CD4-positive, alpha-beta memory T cell (primary cell): ENCODE measurements at regions of chr5 and their contacts with region 1.

Region 1: DNA sequence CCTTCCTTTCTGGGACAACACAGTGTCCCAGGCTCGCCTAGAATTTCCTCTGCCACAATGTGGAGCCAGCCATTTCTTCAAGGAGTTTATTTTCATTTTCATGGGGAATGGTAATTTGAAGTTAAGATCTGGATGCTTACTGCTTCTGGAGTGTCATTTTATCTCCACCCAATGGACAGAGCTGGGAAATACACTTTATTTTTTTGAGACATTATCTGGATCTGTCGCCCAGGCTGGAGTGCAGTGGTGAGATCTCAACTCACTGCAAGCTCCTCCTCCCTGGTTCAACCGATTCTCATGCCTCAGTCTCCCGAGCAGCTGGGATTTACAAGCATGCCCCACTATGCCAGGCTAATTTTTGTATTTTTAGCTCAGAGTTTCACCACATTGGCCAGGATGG is 12.7 kb upstream of the THG1L start:
- DNase-seq: peak; percentile 37 to 61 (median 45)
- H3K4me3 ChIP-seq: no peak overlapping the region
- H3K4me3 Mint-ChIP-seq: peak overlapping the region in 6 of 8 donors; percentile 27 to 78 (median 54)
- H3K27ac ChIP-seq: no peak overlapping the region
- H3K27ac Mint-ChIP-seq: peak overlapping the region in 6 of 7 donors; percentile 23 to 72 (median 42)
- H3K4me1 ChIP-seq: peaks cover 21% of the 10 kb centered on the region
- H3K4me1 Mint-ChIP-seq: peaks cover 16 to 26% (median 20%) of the 10 kb centered on the region in 4 donors
- H3K27me3 ChIP-seq: no peaks in the 10 kb centered on the region
- H3K27me3 Mint-ChIP-seq: no peaks in the 10 kb centered on the region

Region 2: GRCh38 chr5:157328277-157328912 is 390.1 kb before region 1 on chr5:
- CTCF ChIA-PET with region 1: interaction called, 20 read pairs
- POLR2A ChIA-PET with region 1: no interaction called
- intact Hi-C with region 1: loop called (anchors 1 kb)
- DNase-seq: peak; percentile 66 to 69 (median 67)
- H3K4me3 ChIP-seq: no peak overlapping the region
- H3K4me3 Mint-ChIP-seq: peak overlapping the region; percentile 3 to 69 (median 58)
- H3K27ac ChIP-seq: peak overlapping the region; percentile 30
- H3K27ac Mint-ChIP-seq: peak overlapping the region; percentile 72 to 96 (median 89)
- H3K4me1 ChIP-seq: peaks cover 27% of the 10 kb centered on the region
- H3K4me1 Mint-ChIP-seq: peaks cover 23 to 44% (median 26%) of the 10 kb centered on the region in 4 donors
- H3K27me3 ChIP-seq: no peaks in the 10 kb centered on the region
- H3K27me3 Mint-ChIP-seq: no peaks in the 10 kb centered on the region

Region 3: DNA sequence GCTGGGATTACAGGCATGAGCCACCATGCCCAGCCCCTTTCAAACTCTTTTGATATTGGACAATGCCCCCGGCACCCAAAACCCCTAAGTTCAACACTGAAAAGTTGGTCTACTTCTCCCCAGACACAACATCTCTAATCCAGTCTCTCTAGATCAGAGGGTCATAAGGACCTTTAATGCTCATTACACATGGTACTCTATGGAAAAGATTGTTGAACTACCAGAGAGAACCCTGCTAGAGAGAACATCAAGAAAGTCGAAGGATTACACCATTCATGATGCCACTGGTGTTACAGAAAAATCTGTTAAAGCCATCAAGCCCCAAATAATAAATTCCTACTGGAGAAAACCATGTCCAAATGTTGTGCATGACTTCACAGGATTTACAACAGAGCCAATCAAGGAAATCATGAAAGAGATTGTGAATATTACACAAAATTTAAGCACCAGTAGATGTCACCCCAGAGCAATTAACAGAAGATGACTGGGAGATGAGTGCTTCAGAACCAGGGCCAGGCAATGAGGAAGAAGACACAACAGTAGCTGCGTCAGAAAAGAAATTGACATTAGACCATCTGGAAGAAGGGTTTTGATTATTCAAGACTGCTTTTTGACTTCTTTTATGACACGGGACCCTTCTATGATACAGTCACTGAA is 286.8 kb before region 1 on chr5:
- CTCF ChIA-PET with region 1: interaction called, 137 read pairs
- POLR2A ChIA-PET with region 1: interaction called, 4 read pairs
- intact Hi-C with region 1: loop called (anchors 1 kb)
- DNase-seq: peak; percentile 49 to 63 (median 59)
- H3K4me3 ChIP-seq: no peak overlapping the region
- H3K4me3 Mint-ChIP-seq: peak overlapping the region in 4 of 8 donors; percentile 17 to 65 (median 42)
- H3K27ac ChIP-seq: no peak overlapping the region
- H3K27ac Mint-ChIP-seq: peak overlapping the region in 6 of 7 donors; percentile 3 to 83 (median 77)
- H3K4me1 ChIP-seq: peaks cover 4% of the 10 kb centered on the region
- H3K4me1 Mint-ChIP-seq: peaks cover 5 to 7% (median 5%) of the 10 kb centered on the region in 4 donors
- H3K27me3 ChIP-seq: no peaks in the 10 kb centered on the region
- H3K27me3 Mint-ChIP-seq: no peaks in the 10 kb centered on the region

Region 4: GRCh38 chr5:157476702-157477408 is 241.7 kb before region 1 on chr5:
- CTCF ChIA-PET with region 1: interaction called, 27 read pairs
- POLR2A ChIA-PET with region 1: no interaction called
- intact Hi-C with region 1: loop called (anchors 2 kb)
- DNase-seq: peak in 4 of 5 donors; percentile 19 to 36 (median 28)
- H3K4me3 ChIP-seq: no peak overlapping the region
- H3K4me3 Mint-ChIP-seq: no peak overlapping the region
- H3K27ac ChIP-seq: no peak overlapping the region
- H3K27ac Mint-ChIP-seq: peak overlapping the region in 5 of 7 donors; percentile 20 to 70 (median 50)
- H3K4me1 ChIP-seq: peaks cover 35% of the 10 kb centered on the region
- H3K4me1 Mint-ChIP-seq: peaks cover 23 to 45% (median 29%) of the 10 kb centered on the region in 4 donors
- H3K27me3 ChIP-seq: no peaks in the 10 kb centered on the region
- H3K27me3 Mint-ChIP-seq: no peaks in the 10 kb centered on the region

Region 5: GRCh38 chr5:157582731-157583620 is 135.5 kb before region 1 on chr5:
- CTCF ChIA-PET with region 1: interaction called, 10 read pairs
- POLR2A ChIA-PET with region 1: interaction called, 4 read pairs
- intact Hi-C with region 1: no loop called
- DNase-seq: no peak
- H3K4me3 ChIP-seq: no peak overlapping the region
- H3K4me3 Mint-ChIP-seq: peak overlapping the region in 2 of 8 donors; percentile 6 to 22
- H3K27ac ChIP-seq: peak overlapping the region; percentile 6
- H3K27ac Mint-ChIP-seq: peak overlapping the region in 5 of 7 donors; percentile 1 to 70 (median 26)
- H3K4me1 ChIP-seq: peaks cover 20% of the 10 kb centered on the region
- H3K4me1 Mint-ChIP-seq: peaks cover 11 to 33% (median 18%) of the 10 kb centered on the region in 4 donors
- H3K27me3 ChIP-seq: no peaks in the 10 kb centered on the region
- H3K27me3 Mint-ChIP-seq: no peaks in the 10 kb centered on the region

Region 6: GRCh38 chr5:157670662-157671591 is 47.6 kb before region 1 on chr5 and contains the start of gene C5orf52:
- CTCF ChIA-PET with region 1: interaction called, 41 read pairs
- POLR2A ChIA-PET with region 1: no interaction called
- intact Hi-C with region 1: no loop called
- DNase-seq: peak in 2 of 5 donors; percentile 21 to 23
- H3K4me3 ChIP-seq: peak within 1 kb of the TSS; percentile 71 to 85
- H3K4me3 Mint-ChIP-seq: peak within 1 kb of the TSS; percentile 87 to 98 (median 92)
- H3K27ac ChIP-seq: peak within 1 kb of the TSS; percentile 3
- H3K27ac Mint-ChIP-seq: peak within 1 kb of the TSS in 6 of 7 donors; percentile 25 to 90 (median 78)
- H3K4me1 ChIP-seq: peaks cover 13% of the 10 kb centered on the region
- H3K4me1 Mint-ChIP-seq: peaks cover 15 to 27% (median 21%) of the 10 kb centered on the region in 4 donors
- H3K27me3 ChIP-seq: no peaks in the 10 kb centered on the region
- H3K27me3 Mint-ChIP-seq: no peaks in the 10 kb centered on the region
- total RNA-seq, gene C5orf52: not detected

Region 7: GRCh38 chr5:157731272-157732129 is 13.0 kb after region 1 on chr5 and contains the start of gene THG1L:
- CTCF ChIA-PET with region 1: interaction called, 33 read pairs
- POLR2A ChIA-PET with region 1: interaction called, 11 read pairs
- intact Hi-C with region 1: no loop called
- DNase-seq: peak; percentile 95 to 98 (median 96)
- H3K4me3 ChIP-seq: peak within 1 kb of the TSS; percentile 79 to 90
- H3K4me3 Mint-ChIP-seq: peak within 1 kb of the TSS; percentile 94 to 100 (median 98)
- H3K27ac ChIP-seq: peak within 1 kb of the TSS; percentile 82
- H3K27ac Mint-ChIP-seq: peak within 1 kb of the TSS; percentile 94 to 99 (median 97)
- H3K4me1 ChIP-seq: peaks cover 10% of the 10 kb centered on the region
- H3K4me1 Mint-ChIP-seq: peaks cover 11 to 24% (median 18%) of the 10 kb centered on the region in 4 donors
- H3K27me3 ChIP-seq: no peaks in the 10 kb centered on the region
- H3K27me3 Mint-ChIP-seq: no peaks in the 10 kb centered on the region
- total RNA-seq, gene THG1L: 9.1 to 10.5 TPM